ENCODE measurements at regions of chr10 and their contacts with region 1.

Region 1: GRCh38 chr10:100046021-100046486 is 35.6 kb downstream of the CPN1 start:
- DNase-seq: peak; percentile 86
- ATAC-seq: peak; percentile 81
- H3K4me3 ChIP-seq: no peak overlapping the region
- H3K27ac ChIP-seq: peak overlapping the region; percentile 6; the same call in 1 of the 2 replicates
- H3K4me1 ChIP-seq: peaks cover 35 to 41% of the 10 kb centered on the region in 2 experiments
- H3K27me3 ChIP-seq: no peaks in the 10 kb centered on the region
- CTCF ChIP-seq: peak in 2 of 3 experiments; percentile 99; a peak in 4 of 6 replicates
- POLR2A ChIP-seq: no peak
- RAD21 ChIP-seq: no peak

Region 2: DNA sequence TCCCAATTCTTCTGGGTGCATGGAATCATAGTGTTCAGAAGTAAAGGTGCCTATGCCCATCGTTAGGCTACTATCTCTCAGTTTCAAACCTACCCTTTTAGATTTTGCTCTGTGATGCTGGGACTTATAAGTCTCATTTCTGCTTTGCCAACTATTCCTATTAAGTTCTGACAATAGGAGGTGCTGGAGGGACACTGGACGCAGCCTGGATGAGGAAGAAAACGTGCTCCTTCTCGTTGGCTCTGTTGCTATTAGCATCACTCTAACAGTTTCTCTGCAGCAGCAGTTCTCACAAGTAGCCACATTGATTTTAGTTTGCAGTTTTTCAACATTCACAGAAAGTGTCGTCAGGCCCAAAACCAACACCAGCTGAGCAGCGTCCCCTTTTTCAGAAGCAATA is 191.2 kb before region 1 on chr10:
- CTCF ChIA-PET with region 1: interaction called, 38 read pairs
- POLR2A ChIA-PET with region 1: interaction called, 11 read pairs
- RAD21 ChIA-PET with region 1: interaction called, 4 to 6 read pairs
- intact Hi-C with region 1: loop called (anchors 2 kb)
- DNase-seq: peak; percentile 51
- ATAC-seq: peak; percentile 63
- H3K4me3 ChIP-seq: no peak overlapping the region
- H3K27ac ChIP-seq: no peak overlapping the region
- H3K4me1 ChIP-seq: peaks cover 3 to 7% of the 10 kb centered on the region in 2 experiments; a peak in 2 of 4 replicates
- H3K27me3 ChIP-seq: no peaks in the 10 kb centered on the region
- CTCF ChIP-seq: peak; percentile 60 to 81 (median 71)
- POLR2A ChIP-seq: no peak
- RAD21 ChIP-seq: peak; percentile 94

Region 3: GRCh38 chr10:99906470-99906869 is 139.6 kb before region 1 on chr10:
- CTCF ChIA-PET with region 1: interaction called, 16 read pairs
- POLR2A ChIA-PET with region 1: interaction called, 3 read pairs
- RAD21 ChIA-PET with region 1: interaction called, 3 to 9 read pairs
- intact Hi-C with region 1: loop called (anchors 1 kb)
- DNase-seq: peak; percentile 90
- ATAC-seq: peak; percentile 92
- H3K4me3 ChIP-seq: peak overlapping the region in 1 of 2 experiments; percentile 1; a peak in 1 of 4 replicates
- H3K27ac ChIP-seq: peak overlapping the region; percentile 51; the same call in 1 of the 2 replicates
- H3K4me1 ChIP-seq: peaks cover 38 to 58% of the 10 kb centered on the region in 2 experiments
- H3K27me3 ChIP-seq: no peaks in the 10 kb centered on the region
- CTCF ChIP-seq: peak; percentile 29 to 68 (median 38); a peak in 5 of 6 replicates
- POLR2A ChIP-seq: no peak
- RAD21 ChIP-seq: peak; percentile 88

Region 4: DNA sequence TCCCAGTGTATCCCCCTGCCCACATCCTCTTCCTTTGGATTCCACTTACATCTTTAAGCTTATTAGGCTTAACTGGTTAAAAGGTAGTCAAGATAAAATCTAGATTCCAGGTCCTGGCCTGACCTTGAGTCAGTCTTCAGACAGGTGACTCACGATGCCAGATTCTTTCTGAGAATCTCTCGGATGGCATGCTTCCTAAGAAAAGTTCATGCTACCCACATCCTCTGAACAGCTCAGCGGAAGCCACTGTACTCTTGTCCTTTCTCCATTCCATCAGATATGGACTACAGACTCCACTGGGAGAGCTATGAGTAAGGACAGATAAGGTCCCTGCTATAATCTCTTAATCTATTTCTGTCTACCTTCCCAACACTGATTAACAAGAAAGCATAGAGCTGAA is 79.7 kb before region 1 on chr10:
- CTCF ChIA-PET with region 1: interaction called, 13 read pairs
- POLR2A ChIA-PET with region 1: interaction called, 9 read pairs
- RAD21 ChIA-PET with region 1: interaction called in 1 of 2 experiments, 6 read pairs
- intact Hi-C with region 1: loop called (anchors 5 kb)
- DNase-seq: peak; percentile 89
- ATAC-seq: peak; percentile 83
- H3K4me3 ChIP-seq: peak overlapping the region in 1 of 2 experiments; percentile 13; a peak in 2 of 4 replicates
- H3K27ac ChIP-seq: peak overlapping the region; percentile 98
- H3K4me1 ChIP-seq: peaks cover 66 to 79% of the 10 kb centered on the region in 2 experiments
- H3K27me3 ChIP-seq: no peaks in the 10 kb centered on the region
- CTCF ChIP-seq: no peak
- POLR2A ChIP-seq: no peak
- RAD21 ChIP-seq: peak; percentile 39

Region 5: DNA sequence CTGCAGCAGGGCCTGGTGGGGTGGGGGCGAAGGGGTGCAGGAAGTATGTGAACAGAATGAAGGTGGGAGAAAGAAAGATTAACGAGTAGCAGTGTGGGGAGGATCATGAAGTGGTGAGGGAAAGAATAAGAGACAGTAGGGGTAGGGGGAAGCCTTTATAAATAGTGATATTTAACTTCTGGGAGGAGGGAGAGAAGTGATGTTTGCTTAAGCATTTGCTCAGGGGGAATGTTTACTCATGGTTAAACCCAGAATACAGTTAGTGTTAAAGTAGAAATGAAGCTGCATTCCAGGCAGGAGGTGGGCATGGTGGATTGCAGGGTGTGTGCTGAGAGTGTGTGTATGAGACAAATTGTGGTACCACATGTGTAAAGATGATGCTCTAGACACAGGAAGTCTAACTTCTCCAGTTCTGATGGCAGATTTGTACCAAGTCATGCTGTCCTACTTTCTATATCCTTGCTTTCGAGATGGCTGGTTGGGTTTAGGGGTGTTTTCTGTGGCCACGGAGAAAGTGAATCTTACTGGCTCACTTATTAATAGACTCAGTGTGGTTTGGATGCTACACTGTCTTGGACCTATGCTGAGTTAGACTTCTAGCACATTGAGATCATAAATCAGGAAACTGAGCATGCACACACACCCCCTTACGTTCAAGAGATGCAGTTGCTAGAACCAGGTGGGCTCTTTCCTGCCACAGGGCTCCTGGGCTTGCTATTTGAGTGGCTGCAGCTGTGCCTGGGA is 25.7 kb before region 1 on chr10:
- CTCF ChIA-PET with region 1: interaction called, 17 read pairs
- POLR2A ChIA-PET with region 1: interaction called, 4 read pairs
- RAD21 ChIA-PET with region 1: no interaction called
- intact Hi-C with region 1: no loop called
- DNase-seq: no peak
- ATAC-seq: peak; percentile 30; the same call in 1 of the 2 replicates
- H3K4me3 ChIP-seq: no peak overlapping the region
- H3K27ac ChIP-seq: no peak overlapping the region
- H3K4me1 ChIP-seq: peaks cover 13 to 31% of the 10 kb centered on the region in 2 experiments
- H3K27me3 ChIP-seq: no peaks in the 10 kb centered on the region
- CTCF ChIP-seq: no peak
- POLR2A ChIP-seq: no peak
- RAD21 ChIP-seq: no peak

Region 6: GRCh38 chr10:100065084-100065660 is 19.1 kb after region 1 on chr10:
- CTCF ChIA-PET with region 1: interaction called, 10 read pairs
- POLR2A ChIA-PET with region 1: no interaction called
- RAD21 ChIA-PET with region 1: interaction called in 1 of 2 experiments, 3 read pairs
- intact Hi-C with region 1: no loop called
- DNase-seq: no peak
- ATAC-seq: no peak
- H3K4me3 ChIP-seq: no peak overlapping the region
- H3K27ac ChIP-seq: no peak overlapping the region
- H3K4me1 ChIP-seq: peaks cover 0 to 4% of the 10 kb centered on the region in 2 experiments; a peak in 1 of 4 replicates
- H3K27me3 ChIP-seq: no peaks in the 10 kb centered on the region
- CTCF ChIP-seq: no peak
- POLR2A ChIP-seq: no peak
- RAD21 ChIP-seq: no peak

Measured in HCT116 (cell line).